HCT116 (cell line): ENCODE measurements at regions of chr11 and their contacts with region 1.

Region 1: DNA sequence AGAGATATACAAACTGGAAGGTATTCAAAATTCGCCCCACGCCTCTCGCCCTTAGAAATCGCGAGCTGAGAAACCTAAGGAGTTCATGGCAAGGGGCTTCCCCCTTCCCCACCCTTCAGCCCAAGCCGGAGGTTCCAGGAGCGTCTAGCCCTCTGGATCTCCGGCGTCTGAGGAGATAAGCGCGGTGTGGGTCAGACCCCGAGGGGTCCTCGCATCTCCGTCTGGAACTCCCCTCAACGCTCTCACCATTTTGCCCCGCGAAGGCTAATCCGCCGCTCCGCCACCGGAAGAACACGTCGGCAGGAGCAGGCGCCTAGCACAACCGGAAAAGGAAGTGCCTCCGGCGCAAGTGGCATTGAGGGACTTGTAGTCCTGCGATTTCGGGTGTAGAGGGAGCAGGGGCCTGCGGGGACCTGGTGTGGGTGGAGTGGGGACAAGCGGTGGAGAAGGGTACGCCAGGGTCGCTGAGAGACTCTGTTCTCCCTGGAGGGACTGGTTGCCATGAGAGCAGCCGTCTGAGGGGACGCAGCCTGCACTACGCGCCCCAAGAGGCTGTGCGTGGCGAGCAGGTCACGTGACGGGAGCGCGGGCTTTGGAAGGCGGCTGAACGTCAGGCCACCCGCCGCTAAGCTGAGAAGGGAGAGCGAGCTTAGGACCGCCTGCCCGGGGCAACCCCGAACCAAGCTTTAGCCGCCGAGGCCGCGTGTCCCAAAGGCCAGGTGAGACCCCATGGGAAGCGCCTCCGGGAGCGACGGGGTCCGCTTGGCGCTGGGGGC is at the starts of genes FEN1 and TMEM258:
- DNase-seq: peak; percentile 88
- ATAC-seq: peak; percentile 84
- H3K4me3 ChIP-seq: peak within 1 kb of the TSS; percentile 96 to 100
- H3K27ac ChIP-seq: peak within 1 kb of the TSS; percentile 94
- H3K4me1 ChIP-seq: peaks cover 4 to 16% of the 10 kb centered on the region in 2 experiments; a peak in 2 of 4 replicates
- H3K27me3 ChIP-seq: no peaks in the 10 kb centered on the region
- CTCF ChIP-seq: no peak
- POLR2A ChIP-seq: peak; percentile 73
- RAD21 ChIP-seq: no peak
- total RNA-seq, gene FEN1: 89.5 TPM
- total RNA-seq, gene TMEM258: 160 TPM

Region 2: DNA sequence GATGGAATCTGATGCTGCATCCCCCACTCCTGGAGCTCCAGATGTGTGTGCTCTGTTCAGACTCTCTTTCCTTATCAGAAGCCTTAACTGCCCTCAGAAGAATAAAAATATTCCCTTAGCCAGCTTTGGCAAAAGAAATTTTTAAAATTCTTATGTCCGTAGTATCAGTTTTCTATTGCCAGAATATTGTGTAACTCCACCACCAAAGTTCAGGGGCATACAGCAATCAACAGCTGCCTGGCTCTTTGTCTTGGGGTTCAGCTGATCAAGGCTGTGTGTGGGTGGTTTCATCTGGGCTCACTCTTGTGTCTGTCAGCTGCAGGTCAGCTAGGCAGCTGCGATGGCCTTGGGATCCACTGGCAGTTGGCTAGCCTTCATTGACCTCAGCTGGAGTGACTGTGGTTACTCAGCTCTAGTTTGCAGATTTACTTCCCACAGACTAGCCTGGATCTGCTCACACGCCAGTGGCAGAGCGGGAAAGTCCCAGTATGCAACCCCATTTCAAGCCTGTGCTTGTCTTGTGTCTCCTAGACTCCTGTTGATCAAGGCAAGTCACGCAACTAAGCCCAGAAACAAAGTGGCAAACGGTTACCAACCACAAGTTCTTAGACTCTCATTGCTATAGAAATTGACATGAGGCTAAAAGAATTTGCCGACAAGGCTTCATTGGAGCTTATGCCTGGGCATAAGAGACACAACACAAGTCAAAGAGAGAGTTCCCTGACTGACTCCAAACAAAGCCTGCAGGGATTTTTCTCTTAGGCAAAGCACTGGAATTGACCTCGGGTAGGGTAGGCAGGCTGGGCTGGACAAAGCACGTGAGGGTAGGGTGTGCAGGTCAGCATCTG is 422.9 kb before region 1 on chr11:
- CTCF ChIA-PET with region 1: no interaction called
- POLR2A ChIA-PET with region 1: no interaction called
- RAD21 ChIA-PET with region 1: no interaction called
- intact Hi-C with region 1: no loop called
- DNase-seq: no peak
- ATAC-seq: no peak
- H3K4me3 ChIP-seq: no peak overlapping the region
- H3K27ac ChIP-seq: no peak overlapping the region
- H3K4me1 ChIP-seq: no peaks in the 10 kb centered on the region
- H3K27me3 ChIP-seq: no peaks in the 10 kb centered on the region
- CTCF ChIP-seq: no peak
- POLR2A ChIP-seq: no peak
- RAD21 ChIP-seq: no peak

Region 3: GRCh38 chr11:61711498-61711897 is 81.0 kb before region 1 on chr11:
- CTCF ChIA-PET with region 1: no interaction called
- POLR2A ChIA-PET with region 1: no interaction called
- RAD21 ChIA-PET with region 1: no interaction called
- intact Hi-C with region 1: no loop called
- DNase-seq: no peak
- ATAC-seq: no peak
- H3K4me3 ChIP-seq: no peak overlapping the region
- H3K27ac ChIP-seq: no peak overlapping the region
- H3K4me1 ChIP-seq: peaks cover 2 to 4% of the 10 kb centered on the region in 2 experiments; a peak in 2 of 4 replicates
- H3K27me3 ChIP-seq: no peaks in the 10 kb centered on the region
- CTCF ChIP-seq: no peak
- POLR2A ChIP-seq: no peak
- RAD21 ChIP-seq: no peak

Region 4: GRCh38 chr11:61747192-61747966 is 45.1 kb before region 1 on chr11:
- CTCF ChIA-PET with region 1: interaction called, 20 read pairs
- POLR2A ChIA-PET with region 1: no interaction called
- RAD21 ChIA-PET with region 1: interaction called, 5 read pairs
- intact Hi-C with region 1: loop called (anchors 2 kb)
- DNase-seq: peak; percentile 48
- ATAC-seq: peak; percentile 83
- H3K4me3 ChIP-seq: no peak overlapping the region
- H3K27ac ChIP-seq: peak overlapping the region; percentile 21; the same call in 1 of the 2 replicates
- H3K4me1 ChIP-seq: peaks cover 6 to 24% of the 10 kb centered on the region in 2 experiments; a peak in 2 of 4 replicates
- H3K27me3 ChIP-seq: no peaks in the 10 kb centered on the region
- CTCF ChIP-seq: peak in 2 of 3 experiments; percentile 85 to 94; a peak in 4 of 6 replicates
- POLR2A ChIP-seq: no peak
- RAD21 ChIP-seq: no peak

Region 5: GRCh38 chr11:61816736-61817455 is 24.4 kb after region 1 on chr11 and contains the start of gene FADS1:
- CTCF ChIA-PET with region 1: interaction called, 32 read pairs
- POLR2A ChIA-PET with region 1: interaction called, 33 read pairs
- RAD21 ChIA-PET with region 1: no interaction called
- intact Hi-C with region 1: no loop called
- DNase-seq: peak; percentile 91
- ATAC-seq: peak; percentile 57
- H3K4me3 ChIP-seq: peak within 1 kb of the TSS; percentile 85 to 89
- H3K27ac ChIP-seq: peak within 1 kb of the TSS; percentile 96
- H3K4me1 ChIP-seq: peaks cover 32 to 57% of the 10 kb centered on the region in 2 experiments
- H3K27me3 ChIP-seq: no peaks in the 10 kb centered on the region
- CTCF ChIP-seq: peak in 2 of 3 experiments; percentile 41 to 64; a peak in 3 of 6 replicates
- POLR2A ChIP-seq: peak; percentile 68
- RAD21 ChIP-seq: no peak
- total RNA-seq, gene FADS1: 56.6 TPM

Region 6: GRCh38 chr11:61899146-61899841 is 106.8 kb after region 1 on chr11:
- CTCF ChIA-PET with region 1: interaction called, 36 read pairs
- POLR2A ChIA-PET with region 1: no interaction called
- RAD21 ChIA-PET with region 1: no interaction called
- intact Hi-C with region 1: loop called (anchors 1 kb)
- DNase-seq: peak; percentile 36
- ATAC-seq: peak; percentile 90
- H3K4me3 ChIP-seq: no peak overlapping the region
- H3K27ac ChIP-seq: no peak overlapping the region
- H3K4me1 ChIP-seq: 0 out of 4 replicates have a peak, but pooled peaks cover 0 to 3% of the 10 kb centered on the region in 2 experiments
- H3K27me3 ChIP-seq: no peaks in the 10 kb centered on the region
- CTCF ChIP-seq: peak; percentile 97 to 100 (median 100)
- POLR2A ChIP-seq: no peak
- RAD21 ChIP-seq: peak; percentile 95

Region 7: GRCh38 chr11:62108017-62108750 is 315.7 kb after region 1 on chr11:
- CTCF ChIA-PET with region 1: interaction called, 111 read pairs
- POLR2A ChIA-PET with region 1: interaction called, 5 read pairs
- RAD21 ChIA-PET with region 1: interaction called, 6 to 9 read pairs
- intact Hi-C with region 1: loop called (anchors 1 kb)
- DNase-seq: peak; percentile 59
- ATAC-seq: peak; percentile 84
- H3K4me3 ChIP-seq: no peak overlapping the region
- H3K27ac ChIP-seq: no peak overlapping the region
- H3K4me1 ChIP-seq: no peaks in the 10 kb centered on the region; a peak in 1 of 4 replicates
- H3K27me3 ChIP-seq: no peaks in the 10 kb centered on the region
- CTCF ChIP-seq: peak; percentile 68 to 92 (median 88)
- POLR2A ChIP-seq: no peak
- RAD21 ChIP-seq: peak; percentile 95